ENCODE measurements at regions of chr14 and their contacts with region 1.

Region 1: DNA sequence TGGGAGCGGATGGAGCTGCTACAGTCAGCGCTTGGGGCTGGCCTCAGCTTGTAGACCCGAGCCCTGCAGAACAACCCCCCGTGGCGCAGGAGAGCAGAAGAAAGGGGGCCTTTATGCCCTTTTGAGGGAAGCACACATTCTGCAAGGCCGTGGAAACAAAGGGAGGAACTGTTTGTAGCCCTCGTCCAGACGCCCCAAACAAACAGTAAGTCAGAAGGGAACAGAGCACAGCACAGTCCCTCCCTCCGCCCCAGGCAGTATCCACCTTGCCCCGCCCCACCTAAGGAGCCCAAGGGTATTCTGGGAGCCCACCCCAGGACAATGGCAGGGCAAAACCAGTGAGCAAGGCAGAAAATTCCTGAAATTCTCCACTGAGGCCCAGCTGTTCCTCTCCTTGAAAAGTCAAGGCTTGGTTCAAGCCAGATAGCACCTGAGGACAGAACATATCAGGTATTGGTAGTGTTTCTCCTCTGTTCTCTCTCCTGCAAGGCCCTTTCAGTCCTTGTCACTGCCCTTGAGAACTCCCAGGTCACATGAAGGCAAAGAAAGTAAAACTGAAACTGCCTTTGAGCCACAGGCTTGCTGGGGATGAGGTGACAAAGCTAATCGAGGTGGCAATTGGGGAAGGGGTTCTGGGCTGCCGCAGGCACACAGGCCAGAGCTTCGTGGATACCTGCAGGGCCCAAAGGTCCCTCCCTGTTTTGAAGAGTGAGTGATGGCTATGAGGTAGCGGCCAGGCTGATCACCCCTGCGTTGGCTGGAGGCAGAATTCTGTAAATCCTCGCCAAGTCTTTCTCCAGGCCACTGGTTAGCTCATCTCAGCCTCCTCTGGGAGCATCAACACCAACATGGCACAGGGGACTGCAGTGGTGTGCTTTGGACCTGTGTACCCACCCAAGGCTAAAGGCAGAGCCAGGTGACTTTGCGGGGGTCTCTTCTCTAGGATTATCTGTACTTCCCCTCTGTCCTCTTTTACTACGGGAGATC is 499 bp downstream of the DGLUCY start:
- DNase-seq: peak; percentile 85
- ATAC-seq: peak; percentile 80
- H3K4me3 ChIP-seq: peak overlapping the region; percentile 71 to 94 (median 82)
- H3K4me3 Mint-ChIP-seq: peak overlapping the region; percentile 93
- H3K27ac ChIP-seq: peak overlapping the region; percentile 89 to 95
- H3K27ac Mint-ChIP-seq: peak overlapping the region; percentile 98
- H3K4me1 ChIP-seq: peaks cover 35 to 50% of the 10 kb centered on the region in 2 donors
- H3K4me1 Mint-ChIP-seq: peaks cover 68% of the 10 kb centered on the region
- H3K27me3 ChIP-seq: no peaks in the 10 kb centered on the region
- H3K27me3 Mint-ChIP-seq: no peaks in the 10 kb centered on the region
- CTCF ChIP-seq: no peak

Region 2: DNA sequence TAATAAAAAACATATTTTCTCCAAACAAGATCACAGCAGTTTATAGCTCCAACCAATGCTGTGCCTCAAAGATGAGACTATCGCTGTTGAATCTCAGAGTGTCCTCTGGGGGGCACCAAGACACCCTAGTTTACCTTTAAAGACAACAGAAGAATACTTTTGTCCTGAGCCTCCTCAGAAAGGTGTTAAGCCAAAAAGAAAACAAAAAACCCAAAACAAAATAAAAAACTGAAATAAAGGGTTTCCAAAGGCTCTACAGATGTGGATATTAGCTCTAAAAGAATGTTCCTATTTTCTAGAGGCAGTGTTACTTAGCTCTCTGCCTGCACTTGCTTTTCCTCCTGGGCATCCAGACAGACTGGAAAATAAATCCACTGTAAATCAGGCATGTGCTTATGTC is 211.3 kb before region 1 on chr14:
- CTCF ChIA-PET with region 1: interaction called, 21 read pairs
- POLR2A ChIA-PET with region 1: no interaction called
- intact Hi-C with region 1: no loop called
- DNase-seq: peak; percentile 68
- ATAC-seq: peak; percentile 69
- H3K4me3 ChIP-seq: no peak overlapping the region
- H3K4me3 Mint-ChIP-seq: no peak overlapping the region
- H3K27ac ChIP-seq: no peak overlapping the region
- H3K27ac Mint-ChIP-seq: peak overlapping the region; percentile 46
- H3K4me1 ChIP-seq: peaks cover 5 to 8% of the 10 kb centered on the region in 2 donors
- H3K4me1 Mint-ChIP-seq: peaks cover 15% of the 10 kb centered on the region
- H3K27me3 ChIP-seq: no peaks in the 10 kb centered on the region
- H3K27me3 Mint-ChIP-seq: no peaks in the 10 kb centered on the region
- CTCF ChIP-seq: peak; percentile 87

Region 3: GRCh38 chr14:91021991-91022621 is 92.3 kb before region 1 on chr14:
- CTCF ChIA-PET with region 1: no interaction called
- POLR2A ChIA-PET with region 1: no interaction called
- intact Hi-C with region 1: loop called (anchors 1 kb)
- DNase-seq: no peak
- ATAC-seq: peak; percentile 61
- H3K4me3 ChIP-seq: peak overlapping the region; percentile 9 to 70 (median 41)
- H3K4me3 Mint-ChIP-seq: peak overlapping the region; percentile 92
- H3K27ac ChIP-seq: peak overlapping the region; percentile 59 to 89
- H3K27ac Mint-ChIP-seq: peak overlapping the region; percentile 99
- H3K4me1 ChIP-seq: peaks cover 34 to 39% of the 10 kb centered on the region in 2 donors
- H3K4me1 Mint-ChIP-seq: peaks cover 67% of the 10 kb centered on the region
- H3K27me3 ChIP-seq: no peaks in the 10 kb centered on the region
- H3K27me3 Mint-ChIP-seq: no peaks in the 10 kb centered on the region
- CTCF ChIP-seq: no peak

Region 4: DNA sequence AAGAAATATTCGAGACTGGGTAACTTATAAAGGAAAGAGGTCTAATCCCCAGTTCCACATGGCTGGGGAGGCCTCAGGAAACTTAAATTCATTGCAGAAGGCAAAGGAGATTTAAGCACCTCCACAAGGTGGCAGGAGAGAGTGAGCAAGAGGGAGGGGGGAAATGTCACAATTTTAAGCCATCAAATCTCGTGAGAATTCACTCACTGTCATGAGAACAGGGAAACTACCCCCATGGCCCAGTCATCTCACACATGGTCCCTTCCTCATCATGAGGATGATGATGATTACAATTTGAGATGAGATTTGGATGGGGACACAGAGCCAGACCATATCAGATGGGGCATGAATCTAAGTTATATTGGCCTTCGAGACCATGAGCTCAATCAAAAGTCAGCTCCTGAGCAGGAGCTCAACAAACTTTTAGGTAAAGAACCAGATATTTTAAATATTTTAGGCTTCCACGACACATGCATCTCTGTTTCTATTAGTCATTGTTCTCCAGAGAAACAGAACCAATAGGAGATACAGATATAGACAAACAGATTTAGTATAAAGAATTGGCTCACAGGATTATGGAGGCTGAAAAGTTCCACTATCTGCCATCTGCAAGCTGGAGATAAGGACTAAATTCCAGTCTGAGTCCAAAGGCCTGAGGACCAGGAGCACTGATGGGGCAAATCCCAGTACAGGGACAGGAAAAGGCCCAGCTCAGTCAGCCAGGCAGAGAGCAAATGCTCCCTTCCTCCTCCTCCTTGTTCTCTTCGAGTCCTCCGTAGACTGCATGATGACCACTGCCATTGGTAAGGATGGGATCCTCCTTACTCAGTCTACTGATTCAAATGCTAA is 24.4 kb after region 1 on chr14:
- CTCF ChIA-PET with region 1: interaction called, 3 read pairs
- POLR2A ChIA-PET with region 1: interaction called, 7 read pairs
- intact Hi-C with region 1: loop called (anchors 2 kb)
- DNase-seq: peak; percentile 65
- ATAC-seq: peak; percentile 19
- H3K4me3 ChIP-seq: no peak overlapping the region
- H3K4me3 Mint-ChIP-seq: no peak overlapping the region
- H3K27ac ChIP-seq: no peak overlapping the region
- H3K27ac Mint-ChIP-seq: peak overlapping the region; percentile 71
- H3K4me1 ChIP-seq: peaks cover 12 to 21% of the 10 kb centered on the region in 2 donors
- H3K4me1 Mint-ChIP-seq: peaks cover 37% of the 10 kb centered on the region
- H3K27me3 ChIP-seq: no peaks in the 10 kb centered on the region
- H3K27me3 Mint-ChIP-seq: no peaks in the 10 kb centered on the region
- CTCF ChIP-seq: peak; percentile 36